ENCODE measurements at regions of chr10 and their contacts with region 1.

Region 1: GRCh38 chr10:52729271-52730104 is 43.1 kb downstream of the MBL2 start:
- DNase-seq: no peak
- H3K4me3 ChIP-seq: no peak overlapping the region
- H3K27ac ChIP-seq: no peak overlapping the region
- H3K4me1 ChIP-seq: no peaks in the 10 kb centered on the region
- H3K27me3 ChIP-seq: no peaks in the 10 kb centered on the region
- CTCF ChIP-seq: peak in 8 of 11 experiments; percentile 18 to 48 (median 42)
- POLR2A ChIP-seq: no peak

Region 2: DNA sequence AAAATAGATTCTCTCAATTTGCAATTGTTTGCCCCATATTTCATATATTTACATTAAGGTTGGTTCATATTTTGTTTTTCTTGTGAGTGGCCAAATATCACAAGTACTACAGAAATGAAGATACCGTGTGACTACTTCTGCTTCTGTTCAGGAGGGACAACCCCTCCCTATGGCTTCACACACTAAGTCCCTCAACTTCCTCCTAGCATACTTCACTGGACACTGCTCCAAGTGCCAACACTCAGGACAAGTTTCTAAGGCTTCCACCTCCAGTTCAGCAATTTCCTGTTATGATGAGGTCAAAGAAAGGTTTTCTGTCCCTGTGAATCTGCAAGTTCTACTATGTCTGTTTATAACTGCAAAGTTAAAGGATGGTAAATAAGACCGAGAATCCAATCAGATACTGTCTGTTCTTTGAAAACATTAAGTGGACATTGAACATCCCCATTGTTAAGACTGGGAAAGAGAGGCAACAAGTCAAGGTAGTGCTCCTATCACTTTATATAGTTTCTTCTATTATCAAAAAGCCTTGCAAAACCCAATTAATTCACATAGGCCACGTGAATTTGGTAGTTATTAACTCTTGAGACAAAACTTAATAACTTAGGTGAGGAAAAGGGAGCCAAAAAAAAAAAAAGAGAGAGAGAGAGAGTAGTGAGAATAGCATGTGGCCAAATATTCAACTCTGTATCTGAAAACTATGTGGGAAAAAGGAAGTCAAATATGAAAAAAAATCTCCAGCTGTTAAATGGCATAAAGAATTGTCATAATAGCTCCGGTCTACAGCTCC is 496.7 kb before region 1 on chr10:
- intact Hi-C with region 1: no loop called
- DNase-seq: no peak
- H3K4me3 ChIP-seq: peak overlapping the region in 4 of 8 donors; percentile 21 to 49 (median 26)
- H3K27ac ChIP-seq: peak overlapping the region in 2 of 8 donors; percentile 18 to 37
- H3K4me1 ChIP-seq: peaks cover 5 to 22% (median 14%) of the 10 kb centered on the region in 6 donors
- H3K27me3 ChIP-seq: no peaks in the 10 kb centered on the region
- CTCF ChIP-seq: no peak
- POLR2A ChIP-seq: no peak

Region 3: GRCh38 chr10:52644373-52645186 is 84.9 kb before region 1 on chr10:
- intact Hi-C with region 1: loop called (anchors 5 kb)
- DNase-seq: no peak
- H3K4me3 ChIP-seq: no peak overlapping the region
- H3K27ac ChIP-seq: no peak overlapping the region
- H3K4me1 ChIP-seq: no peaks in the 10 kb centered on the region
- H3K27me3 ChIP-seq: no peaks in the 10 kb centered on the region
- CTCF ChIP-seq: peak in 8 of 11 experiments; percentile 23 to 65 (median 60)
- POLR2A ChIP-seq: no peak